RWPE1 (cell line): ENCODE measurements at regions of chr5 and their contacts with region 1.

Region 1: DNA sequence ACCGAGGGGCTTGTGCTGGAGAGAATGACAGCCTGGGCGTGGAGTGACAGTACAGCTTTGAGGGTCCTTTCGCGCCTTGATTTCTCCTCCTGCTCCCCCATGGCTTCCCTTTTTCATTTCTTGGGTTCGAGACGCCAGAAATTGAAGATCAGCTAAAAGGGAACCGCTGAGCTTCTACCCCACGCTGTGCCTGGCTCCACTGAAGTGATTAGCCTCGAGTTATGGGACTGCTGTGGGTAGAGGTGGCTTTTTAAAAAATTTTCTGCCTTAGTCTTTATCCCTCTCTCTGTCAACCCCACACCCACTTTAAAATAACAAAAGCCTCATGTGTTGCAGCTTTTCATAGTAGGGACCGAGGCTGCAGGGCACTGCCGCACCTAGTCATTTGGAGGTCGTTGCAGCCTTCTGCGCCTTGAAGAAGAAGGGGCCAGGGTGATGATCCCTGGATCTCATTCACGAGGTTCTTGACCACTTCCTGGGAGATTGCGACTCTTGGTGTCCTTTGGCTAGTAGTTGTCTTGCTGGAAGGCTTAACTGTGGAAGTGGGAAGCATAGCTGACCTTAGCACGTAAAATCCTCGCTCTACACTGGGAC is 603 bp downstream of the PPIP5K2 start:
- DNase-seq: peak; percentile 22
- H3K27ac ChIP-seq: peak overlapping the region; percentile 99
- CTCF ChIP-seq: no peak

Region 2: DNA sequence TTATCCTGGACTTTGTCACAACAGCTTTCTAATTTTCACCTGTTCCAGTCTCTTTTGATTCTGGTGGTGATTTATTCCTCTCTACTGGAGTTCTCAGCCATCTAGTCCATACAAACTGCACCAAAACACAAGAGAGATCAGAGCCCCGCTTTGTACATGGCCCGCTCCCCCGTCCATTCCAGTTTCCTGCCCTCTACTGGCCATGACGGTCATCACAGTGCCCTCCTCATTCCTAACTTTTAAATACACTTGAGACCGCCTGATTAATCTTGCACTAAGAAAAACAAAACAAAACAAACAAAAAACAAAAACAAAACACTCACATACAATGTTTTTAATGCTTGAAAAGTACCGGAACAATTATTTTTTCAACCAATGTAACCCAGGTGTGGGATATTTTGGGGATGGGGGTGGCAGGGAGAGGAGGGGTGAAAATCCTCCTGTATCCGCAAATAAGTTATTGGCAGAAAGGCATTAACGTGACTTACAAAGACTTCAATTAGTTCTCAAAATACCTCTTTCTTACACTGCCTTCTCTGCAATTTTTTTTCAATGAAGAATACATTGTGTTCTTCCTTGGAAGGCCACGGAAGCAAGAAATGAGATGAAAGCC is 450.4 kb before region 1 on chr5:
- CTCF ChIA-PET with region 1: no interaction called
- POLR2A ChIA-PET with region 1: no interaction called
- DNase-seq: peak; percentile 49
- H3K27ac ChIP-seq: no peak overlapping the region
- CTCF ChIP-seq: peak; percentile 40

Region 3: DNA sequence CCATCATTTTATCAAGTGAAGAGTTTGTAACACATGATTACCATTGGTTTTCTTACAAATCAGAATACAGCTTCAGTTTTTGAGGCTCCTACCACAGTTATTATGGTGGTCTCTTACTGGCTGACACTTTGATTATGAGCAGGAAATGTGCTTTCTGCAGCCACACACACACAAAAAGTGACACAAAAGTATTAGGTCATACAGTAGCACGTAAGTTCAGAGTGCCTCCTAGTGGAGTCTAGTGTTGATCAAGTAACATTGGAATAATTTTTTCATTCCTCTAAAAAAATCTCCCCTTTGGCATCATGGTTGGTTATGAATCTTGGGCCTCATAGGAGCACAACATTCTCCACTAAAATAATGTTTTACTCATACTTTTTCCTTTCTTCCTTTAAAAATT is 328.0 kb before region 1 on chr5:
- CTCF ChIA-PET with region 1: no interaction called
- POLR2A ChIA-PET with region 1: no interaction called
- DNase-seq: no peak
- H3K27ac ChIP-seq: no peak overlapping the region
- CTCF ChIP-seq: no peak

Region 4: GRCh38 chr5:102991802-102992201 is 128.9 kb before region 1 on chr5:
- CTCF ChIA-PET with region 1: no interaction called
- POLR2A ChIA-PET with region 1: no interaction called
- DNase-seq: no peak
- H3K27ac ChIP-seq: no peak overlapping the region
- CTCF ChIP-seq: no peak

Region 5: GRCh38 chr5:103258368-103258956 is 137.8 kb after region 1 on chr5 and contains the start of gene MACIR:
- CTCF ChIA-PET with region 1: no interaction called
- POLR2A ChIA-PET with region 1: interaction called, 12 read pairs
- DNase-seq: peak; percentile 98
- H3K27ac ChIP-seq: peak within 1 kb of the TSS; percentile 87
- CTCF ChIP-seq: no peak

Region 6: GRCh38 chr5:103793595-103794182 is 673.0 kb after region 1 on chr5:
- CTCF ChIA-PET with region 1: no interaction called
- POLR2A ChIA-PET with region 1: no interaction called
- DNase-seq: no peak
- H3K27ac ChIP-seq: no peak overlapping the region
- CTCF ChIP-seq: no peak